Calu3 (cell line): ENCODE measurements at regions of chr22 and their contacts with region 1.

Region 1: DNA sequence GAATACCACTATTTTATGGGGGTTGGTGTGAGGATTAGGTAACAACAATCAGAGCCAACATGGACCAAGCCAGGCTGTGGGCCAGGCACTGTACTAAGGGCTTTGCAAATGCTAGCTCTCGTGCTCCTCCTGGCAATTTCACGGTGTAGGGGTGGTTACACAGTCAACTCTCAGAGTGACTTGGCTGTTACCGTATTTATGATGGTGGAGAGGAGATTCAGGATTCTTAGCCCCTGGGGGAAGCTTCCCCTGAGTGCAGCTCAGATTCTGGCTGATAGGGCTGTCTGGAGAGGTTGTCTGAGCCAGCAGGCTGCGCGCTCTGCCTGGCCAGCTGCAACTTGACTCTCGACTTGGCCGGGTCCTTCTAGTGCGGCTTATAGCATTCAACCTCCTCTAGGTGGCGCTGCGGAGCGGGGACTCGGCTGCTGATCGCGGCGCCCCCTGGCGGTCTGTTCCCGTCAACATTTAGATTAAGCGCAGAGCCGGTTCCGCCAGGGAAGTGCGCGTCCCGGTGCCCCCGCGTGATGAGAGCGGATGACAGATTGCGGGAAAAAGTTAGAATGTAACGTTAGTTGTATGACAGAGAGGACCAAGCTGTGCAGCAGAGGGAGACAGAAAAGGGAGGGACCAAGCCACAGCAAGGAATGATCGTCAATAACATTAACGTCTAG is 4.5 kb upstream of the NCF4 start:
- DNase-seq: peak; percentile 95
- H3K4me3 Mint-ChIP-seq: peak overlapping the region; percentile 4
- H3K27ac Mint-ChIP-seq: peak overlapping the region; percentile 6
- H3K4me1 Mint-ChIP-seq: peaks cover 17% of the 10 kb centered on the region
- H3K27me3 Mint-ChIP-seq: peaks cover 57% of the 10 kb centered on the region
- CTCF ChIP-seq: peak; percentile 100

Region 2: GRCh38 chr22:36775964-36776669 is 80.1 kb before region 1 on chr22 and contains the start of gene IFT27:
- CTCF ChIA-PET with region 1: interaction called, 12 read pairs
- intact Hi-C with region 1: loop called (anchors 5 kb)
- DNase-seq: peak; percentile 96
- H3K4me3 Mint-ChIP-seq: peak within 1 kb of the TSS; percentile 76
- H3K27ac Mint-ChIP-seq: peak within 1 kb of the TSS; percentile 78
- H3K4me1 Mint-ChIP-seq: peaks cover 6% of the 10 kb centered on the region
- H3K27me3 Mint-ChIP-seq: peaks cover 25% of the 10 kb centered on the region
- CTCF ChIP-seq: no peak
- total RNA-seq, gene IFT27: 41.0 and 47.0 TPM in 2 replicates

Region 3: DNA sequence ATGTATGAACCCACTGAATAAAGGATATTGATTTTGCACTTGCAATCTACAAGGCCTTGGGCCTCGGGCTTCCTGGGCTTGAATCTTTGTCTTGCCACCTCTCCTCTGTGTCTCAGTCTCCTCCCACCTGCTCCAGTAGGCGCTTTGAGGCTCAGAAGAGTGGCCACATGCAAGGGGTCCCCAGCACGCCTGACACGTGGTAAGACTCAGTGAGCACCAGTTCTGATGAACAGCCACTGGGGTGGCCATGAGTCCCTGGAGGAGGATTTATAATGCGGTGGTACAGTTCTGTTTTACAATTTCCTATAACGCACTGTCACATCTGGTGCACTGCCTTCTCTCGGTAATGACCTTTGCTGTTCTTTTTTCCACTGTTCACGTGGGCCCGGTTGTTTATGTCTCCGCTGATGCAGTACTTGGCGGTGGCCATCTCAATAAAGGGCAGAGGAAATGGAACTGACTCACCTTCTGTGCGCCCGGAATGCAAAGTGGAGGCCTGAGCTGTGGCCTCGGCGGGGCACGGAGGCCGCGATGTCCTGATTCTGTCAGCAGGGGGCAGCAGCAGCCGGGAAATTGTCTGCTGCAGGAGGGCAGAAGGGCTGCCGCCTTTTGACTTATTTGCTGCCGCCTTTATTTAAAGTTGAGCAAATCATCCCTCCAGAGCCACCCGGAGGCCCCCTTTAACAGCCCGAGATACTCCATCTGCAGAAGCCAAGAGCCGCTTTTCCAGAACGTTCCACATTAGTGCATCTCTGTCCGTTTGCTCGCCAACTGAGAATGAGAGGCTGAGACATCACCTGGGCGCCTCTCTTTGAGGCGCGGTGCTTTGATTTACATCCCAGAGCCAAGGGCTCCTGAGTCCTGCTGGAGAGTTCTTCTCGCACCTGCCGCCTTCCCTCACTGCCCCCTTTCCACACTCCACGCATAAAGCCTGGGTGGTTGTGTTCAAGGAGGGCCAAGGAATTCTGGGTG is 74.3 kb before region 1 on chr22:
- CTCF ChIA-PET with region 1: interaction called, 10 read pairs
- intact Hi-C with region 1: loop called (anchors 5 kb)
- DNase-seq: peak; percentile 89
- H3K4me3 Mint-ChIP-seq: no peak overlapping the region
- H3K27ac Mint-ChIP-seq: no peak overlapping the region
- H3K4me1 Mint-ChIP-seq: no peaks in the 10 kb centered on the region
- H3K27me3 Mint-ChIP-seq: peaks cover 75% of the 10 kb centered on the region
- CTCF ChIP-seq: peak; percentile 95

Region 4: DNA sequence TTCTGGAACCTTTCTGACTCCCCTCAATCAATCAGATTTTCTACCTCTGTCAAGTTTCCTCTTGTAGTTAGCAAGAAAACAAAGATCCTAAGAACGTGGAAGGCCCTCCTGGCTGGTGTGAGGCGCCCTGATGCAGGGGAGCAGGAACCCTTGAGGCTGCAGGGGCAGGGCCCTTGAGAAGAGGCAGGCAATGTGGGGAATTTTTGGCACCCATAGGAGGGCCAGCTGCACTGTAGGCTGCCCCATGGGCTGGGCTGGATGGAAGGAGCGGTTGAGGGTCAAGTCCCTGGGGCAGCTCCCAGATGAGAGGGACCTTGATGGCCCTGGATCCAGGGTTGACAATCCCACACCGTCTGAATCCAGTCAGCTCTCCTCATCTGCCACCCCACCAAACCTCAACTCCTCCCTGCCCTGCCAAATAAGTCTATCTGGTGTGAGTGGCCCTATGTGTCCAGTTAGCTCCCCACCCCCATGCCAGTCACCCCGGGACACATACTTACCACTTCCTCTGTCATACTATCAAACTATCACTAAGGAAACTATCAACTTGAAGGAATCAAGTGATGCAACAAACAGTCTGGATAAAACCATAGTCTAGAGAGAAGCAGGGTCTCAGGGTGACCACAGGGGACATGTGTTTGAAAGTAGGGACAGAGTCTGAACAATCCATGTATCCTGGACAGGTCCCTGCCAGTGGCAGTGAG is 43.8 kb after region 1 on chr22:
- CTCF ChIA-PET with region 1: no interaction called
- intact Hi-C with region 1: no loop called
- DNase-seq: no peak
- H3K4me3 Mint-ChIP-seq: no peak overlapping the region
- H3K27ac Mint-ChIP-seq: no peak overlapping the region
- H3K4me1 Mint-ChIP-seq: no peaks in the 10 kb centered on the region
- H3K27me3 Mint-ChIP-seq: peaks cover 100% of the 10 kb centered on the region
- CTCF ChIP-seq: no peak

Region 5: DNA sequence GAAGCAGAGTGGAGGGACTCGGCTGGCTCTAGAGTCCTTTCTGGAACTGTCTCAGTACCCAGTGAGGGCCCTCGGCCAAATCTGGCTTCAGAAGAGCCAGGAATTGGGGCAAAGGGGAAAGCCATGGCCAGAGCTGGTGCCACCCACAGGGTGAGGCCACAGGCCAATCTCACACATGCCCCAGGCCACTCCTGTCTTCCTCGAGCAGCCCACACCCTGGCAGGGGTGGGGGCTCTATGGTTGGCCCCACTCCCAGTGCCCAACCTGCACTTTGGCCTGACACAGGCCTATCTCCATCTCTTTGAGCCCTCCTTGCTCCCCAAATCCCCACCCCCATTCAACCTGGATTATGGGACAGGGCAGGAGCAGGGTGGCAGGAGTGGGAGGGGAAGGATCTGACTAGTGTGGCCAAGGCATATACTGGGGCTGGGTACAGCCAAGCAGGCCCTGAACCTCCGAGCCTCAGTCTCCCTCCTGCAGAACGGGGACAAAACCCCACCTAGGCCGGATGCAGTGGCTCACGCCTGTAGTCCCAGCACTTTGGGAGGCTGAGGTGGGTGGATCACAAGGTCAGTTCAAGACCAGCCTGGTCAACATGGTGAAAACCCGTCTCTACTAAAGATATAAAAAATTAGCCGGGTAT is 156.1 kb after region 1 on chr22:
- CTCF ChIA-PET with region 1: no interaction called
- intact Hi-C with region 1: no loop called
- DNase-seq: no peak
- H3K4me3 Mint-ChIP-seq: no peak overlapping the region
- H3K27ac Mint-ChIP-seq: no peak overlapping the region
- H3K4me1 Mint-ChIP-seq: peaks cover 21% of the 10 kb centered on the region
- H3K27me3 Mint-ChIP-seq: peaks cover 30% of the 10 kb centered on the region
- CTCF ChIP-seq: no peak